T-cell (primary cell): ENCODE measurements at regions of chr22 and their contacts with region 1.

Region 1: DNA sequence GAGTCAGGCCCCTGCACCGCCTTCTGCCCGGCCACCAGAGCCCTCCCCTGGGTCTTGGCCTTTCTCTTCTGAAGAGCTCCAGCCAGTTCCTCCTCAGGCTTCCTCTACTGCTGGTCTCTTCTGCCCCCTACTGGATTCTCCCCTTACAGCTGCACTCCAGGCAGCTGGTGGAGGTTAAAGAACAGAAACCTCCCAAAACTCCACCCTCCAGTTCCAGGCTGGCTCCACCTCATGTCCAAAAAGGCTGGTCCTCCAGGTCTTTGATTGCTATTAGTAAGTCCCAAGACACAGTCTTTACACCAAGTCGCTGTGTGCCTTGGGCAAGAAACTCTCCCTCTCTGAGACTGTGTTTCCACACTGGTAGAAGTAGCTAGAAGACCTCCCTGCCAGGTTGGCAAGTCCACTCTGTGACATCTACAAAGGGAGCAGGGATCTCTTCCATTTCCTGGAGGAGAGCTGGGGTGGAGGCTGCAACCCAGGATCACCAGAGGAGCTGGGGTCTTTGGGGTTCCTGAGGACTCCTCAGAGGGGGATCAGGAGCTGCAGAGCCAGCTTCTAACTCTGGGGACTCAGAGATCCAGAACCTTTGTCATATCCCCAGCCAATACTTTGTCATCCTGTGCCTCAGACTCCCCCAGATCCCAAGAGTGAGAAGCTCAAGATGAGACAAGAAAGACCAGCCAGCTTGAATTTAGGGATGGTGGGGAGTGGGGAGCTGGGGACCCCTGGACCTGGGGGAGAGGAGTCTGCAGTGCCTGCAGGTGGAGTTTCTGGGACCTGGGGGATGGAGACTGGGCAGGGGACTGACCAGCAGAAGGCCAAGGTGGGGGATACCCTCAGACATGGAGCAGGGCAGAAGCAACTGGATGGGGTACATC is 3.4 kb upstream of the IGLL5 start:
- DNase-seq: peak; percentile 25 to 87 (median 60)
- ATAC-seq: peak; percentile 70 to 82 (median 80)
- H3K4me3 ChIP-seq: no peak overlapping the region
- H3K4me3 Mint-ChIP-seq: no peak overlapping the region
- H3K27ac ChIP-seq: no peak overlapping the region
- H3K27ac Mint-ChIP-seq: peak overlapping the region in 1 of 2 donors; percentile 43
- H3K4me1 ChIP-seq: peaks cover 0 to 8% of the 10 kb centered on the region in 2 experiments
- H3K4me1 Mint-ChIP-seq: peaks cover 0 to 8% (median 4%) of the 10 kb centered on the region in 3 donors
- H3K27me3 ChIP-seq: peaks cover 0 to 26% of the 10 kb centered on the region in 2 experiments
- H3K27me3 Mint-ChIP-seq: peaks cover 3 to 9% of the 10 kb centered on the region in 2 donors

Region 2: DNA sequence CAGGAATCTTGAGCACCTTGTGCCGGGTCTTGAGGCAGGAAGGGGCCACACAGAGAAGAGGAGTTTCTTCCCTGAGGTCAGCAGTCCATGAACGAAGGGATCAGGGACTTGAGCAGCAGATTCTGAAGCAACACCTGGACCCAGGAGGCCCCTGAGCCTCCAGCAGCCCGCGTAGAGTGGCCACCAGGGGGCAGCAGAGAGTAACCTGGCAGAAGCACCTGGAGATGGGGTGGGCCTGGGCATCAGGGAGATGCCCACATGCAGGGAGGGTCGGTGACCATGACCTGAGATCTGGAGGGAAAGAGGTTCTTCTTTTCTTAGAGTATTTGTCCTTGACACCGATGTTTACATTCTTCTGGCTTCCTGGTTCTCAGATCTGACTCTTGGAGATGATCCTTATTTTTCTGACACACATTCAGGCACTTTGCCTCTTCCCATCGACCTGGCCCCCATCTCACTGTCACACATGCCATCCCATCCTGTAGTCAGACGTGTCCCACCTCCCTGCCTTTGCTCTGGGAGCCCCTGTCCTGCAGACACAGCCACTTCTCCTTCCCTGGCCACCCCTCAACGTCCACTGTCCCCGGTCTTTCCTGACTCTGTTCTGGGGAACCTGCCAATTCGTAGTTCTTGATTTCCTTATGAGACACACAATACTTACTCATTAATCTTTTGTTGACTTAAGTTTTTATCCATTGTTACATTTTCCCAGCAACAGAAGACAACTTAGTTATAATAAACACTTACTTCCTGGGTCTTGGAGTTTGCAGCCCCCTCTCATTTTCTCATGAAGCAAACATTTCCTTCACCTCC is 173.3 kb before region 1 on chr22:
- CTCF ChIA-PET with region 1: interaction called in 1 of 2 experiments, 14 read pairs
- POLR2A ChIA-PET with region 1: no interaction called
- DNase-seq: peak; percentile 33 to 85 (median 70)
- ATAC-seq: peak; percentile 50 to 70 (median 64)
- H3K4me3 ChIP-seq: no peak overlapping the region
- H3K4me3 Mint-ChIP-seq: peak overlapping the region in 1 of 3 donors; percentile 16
- H3K27ac ChIP-seq: no peak overlapping the region
- H3K27ac Mint-ChIP-seq: no peak overlapping the region
- H3K4me1 ChIP-seq: no peaks in the 10 kb centered on the region
- H3K4me1 Mint-ChIP-seq: peaks cover 0 to 2% (median 0%) of the 10 kb centered on the region in 3 donors
- H3K27me3 ChIP-seq: peaks cover 0 to 2% of the 10 kb centered on the region in 2 experiments
- H3K27me3 Mint-ChIP-seq: no peaks in the 10 kb centered on the region

Region 3: DNA sequence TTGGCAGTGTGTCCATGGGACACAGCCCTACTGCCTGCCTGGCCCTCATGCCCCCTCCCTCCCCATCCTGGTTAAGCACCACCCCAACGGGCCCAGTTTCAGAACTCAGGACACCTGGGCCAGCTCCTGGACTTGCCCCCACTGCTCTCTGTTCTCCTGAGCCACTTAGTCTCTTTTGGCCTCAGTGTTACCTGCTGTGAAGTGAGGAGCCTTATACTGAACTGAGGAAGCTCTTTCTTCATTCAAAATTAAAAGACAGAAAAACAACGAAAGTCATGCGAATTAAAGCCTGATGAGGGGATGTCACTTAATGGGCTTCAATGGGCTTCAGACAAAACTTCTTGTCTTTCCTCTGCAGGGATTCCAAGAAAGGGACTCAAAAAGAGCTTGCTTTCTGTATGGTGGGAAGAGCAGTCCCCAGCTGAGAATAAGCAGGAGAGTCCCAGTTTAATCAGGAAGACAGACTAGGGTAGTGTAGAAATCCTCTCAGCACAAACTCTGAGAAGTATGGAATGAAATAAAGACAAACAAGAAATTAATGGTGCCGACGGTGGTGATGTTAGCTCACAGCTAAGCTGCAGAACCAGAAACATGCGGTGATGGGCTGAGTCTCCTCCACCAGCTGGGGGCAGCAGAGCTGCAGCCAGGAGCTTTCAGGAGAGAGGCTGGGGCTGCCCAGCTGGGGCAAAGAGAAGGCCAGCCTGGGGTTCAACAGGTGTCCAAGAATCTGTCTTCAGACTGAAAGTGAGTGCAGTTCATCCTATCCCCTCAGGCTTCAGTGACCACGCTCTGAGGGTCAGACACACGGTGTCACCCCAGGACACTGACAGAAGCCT is 138.8 kb before region 1 on chr22:
- CTCF ChIA-PET with region 1: interaction called in 1 of 2 experiments, 27 read pairs
- POLR2A ChIA-PET with region 1: no interaction called
- DNase-seq: peak in 29 of 35 experiments; percentile 11 to 63 (median 37)
- ATAC-seq: peak in 3 of 4 experiments; percentile 57 to 71 (median 69)
- H3K4me3 ChIP-seq: no peak overlapping the region
- H3K4me3 Mint-ChIP-seq: no peak overlapping the region
- H3K27ac ChIP-seq: no peak overlapping the region
- H3K27ac Mint-ChIP-seq: peak overlapping the region; percentile 6 to 36
- H3K4me1 ChIP-seq: peaks cover 0 to 35% of the 10 kb centered on the region in 2 experiments
- H3K4me1 Mint-ChIP-seq: peaks cover 0 to 26% (median 9%) of the 10 kb centered on the region in 3 donors
- H3K27me3 ChIP-seq: peaks cover 0 to 8% of the 10 kb centered on the region in 2 experiments
- H3K27me3 Mint-ChIP-seq: peaks cover 10 to 22% of the 10 kb centered on the region in 2 donors

Region 4: GRCh38 chr22:22770280-22770871 is 113.9 kb before region 1 on chr22:
- CTCF ChIA-PET with region 1: interaction called, 5 to 10 read pairs
- POLR2A ChIA-PET with region 1: no interaction called
- DNase-seq: peak in 22 of 35 experiments; percentile 11 to 67 (median 34)
- ATAC-seq: peak; percentile 36 to 55 (median 44)
- H3K4me3 ChIP-seq: no peak overlapping the region
- H3K4me3 Mint-ChIP-seq: no peak overlapping the region
- H3K27ac ChIP-seq: no peak overlapping the region
- H3K27ac Mint-ChIP-seq: peak overlapping the region; percentile 29 to 48
- H3K4me1 ChIP-seq: peaks cover 0 to 65% of the 10 kb centered on the region in 2 experiments
- H3K4me1 Mint-ChIP-seq: peaks cover 6 to 15% (median 8%) of the 10 kb centered on the region in 3 donors
- H3K27me3 ChIP-seq: no peaks in the 10 kb centered on the region
- H3K27me3 Mint-ChIP-seq: peaks cover 8 to 16% of the 10 kb centered on the region in 2 donors

Region 5: DNA sequence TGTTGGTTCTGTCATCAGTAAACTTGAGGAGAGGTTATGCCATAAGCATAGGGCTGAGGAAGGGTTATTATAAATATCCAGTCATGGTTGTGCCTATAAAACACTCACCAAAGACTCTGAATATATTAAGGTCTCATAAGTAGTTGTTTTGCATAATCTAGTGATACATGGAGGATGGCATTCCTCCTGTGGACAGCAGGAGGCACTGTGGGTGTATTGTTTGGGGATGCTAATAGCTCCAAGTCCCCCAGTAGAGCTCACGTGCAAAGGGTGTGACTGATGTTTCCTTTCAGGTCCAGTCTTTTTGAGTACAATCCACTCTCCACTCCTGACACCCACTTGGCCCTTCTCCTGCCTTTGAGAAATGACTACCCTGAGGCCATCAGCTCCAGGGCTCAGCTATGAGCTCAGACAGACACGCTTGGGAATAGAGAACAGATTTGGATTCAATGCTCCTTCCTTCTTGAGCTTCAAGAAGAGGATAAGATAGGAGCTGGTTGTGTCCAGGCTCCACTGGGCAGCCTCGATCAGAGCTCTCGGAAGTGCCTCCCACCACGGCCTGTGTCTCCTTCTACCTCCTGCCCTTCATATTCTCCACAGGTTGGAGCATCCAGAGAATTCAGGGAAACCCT is 81.8 kb before region 1 on chr22:
- CTCF ChIA-PET with region 1: interaction called, 7 to 24 read pairs
- POLR2A ChIA-PET with region 1: interaction called in 1 of 2 experiments, 3 read pairs
- DNase-seq: peak in 27 of 35 experiments; percentile 21 to 71 (median 49)
- ATAC-seq: peak in 3 of 4 experiments; percentile 54 to 84 (median 70)
- H3K4me3 ChIP-seq: no peak overlapping the region
- H3K4me3 Mint-ChIP-seq: no peak overlapping the region
- H3K27ac ChIP-seq: no peak overlapping the region
- H3K27ac Mint-ChIP-seq: peak overlapping the region in 1 of 2 donors; percentile 34
- H3K4me1 ChIP-seq: peaks cover 6 to 9% of the 10 kb centered on the region in 2 experiments
- H3K4me1 Mint-ChIP-seq: peaks cover 0 to 51% (median 35%) of the 10 kb centered on the region in 3 donors
- H3K27me3 ChIP-seq: no peaks in the 10 kb centered on the region
- H3K27me3 Mint-ChIP-seq: no peaks in the 10 kb centered on the region